Common myeloid progenitor, CD34-positive (primary cell): ENCODE measurements at regions of chr20 and their contacts with region 1.

Region 1: GRCh38 chr20:740141-740540 is 28.2 kb downstream of the SLC52A3 start:
- DNase-seq: no peak
- H3K4me3 ChIP-seq: no peak overlapping the region
- H3K27ac ChIP-seq: no peak overlapping the region
- H3K4me1 ChIP-seq: no peaks in the 10 kb centered on the region
- H3K27me3 ChIP-seq: peaks cover 0 to 1% (median 0%) of the 10 kb centered on the region in 5 experiments

Region 2: GRCh38 chr20:478949-479429 is 261.2 kb before region 1 on chr20:
- CTCF ChIA-PET with region 1: no interaction called
- POLR2A ChIA-PET with region 1: no interaction called
- DNase-seq: peak; percentile 72 to 89 (median 82)
- H3K4me3 ChIP-seq: no peak overlapping the region
- H3K27ac ChIP-seq: no peak overlapping the region
- H3K4me1 ChIP-seq: no peaks in the 10 kb centered on the region
- H3K27me3 ChIP-seq: no peaks in the 10 kb centered on the region

Region 3: DNA sequence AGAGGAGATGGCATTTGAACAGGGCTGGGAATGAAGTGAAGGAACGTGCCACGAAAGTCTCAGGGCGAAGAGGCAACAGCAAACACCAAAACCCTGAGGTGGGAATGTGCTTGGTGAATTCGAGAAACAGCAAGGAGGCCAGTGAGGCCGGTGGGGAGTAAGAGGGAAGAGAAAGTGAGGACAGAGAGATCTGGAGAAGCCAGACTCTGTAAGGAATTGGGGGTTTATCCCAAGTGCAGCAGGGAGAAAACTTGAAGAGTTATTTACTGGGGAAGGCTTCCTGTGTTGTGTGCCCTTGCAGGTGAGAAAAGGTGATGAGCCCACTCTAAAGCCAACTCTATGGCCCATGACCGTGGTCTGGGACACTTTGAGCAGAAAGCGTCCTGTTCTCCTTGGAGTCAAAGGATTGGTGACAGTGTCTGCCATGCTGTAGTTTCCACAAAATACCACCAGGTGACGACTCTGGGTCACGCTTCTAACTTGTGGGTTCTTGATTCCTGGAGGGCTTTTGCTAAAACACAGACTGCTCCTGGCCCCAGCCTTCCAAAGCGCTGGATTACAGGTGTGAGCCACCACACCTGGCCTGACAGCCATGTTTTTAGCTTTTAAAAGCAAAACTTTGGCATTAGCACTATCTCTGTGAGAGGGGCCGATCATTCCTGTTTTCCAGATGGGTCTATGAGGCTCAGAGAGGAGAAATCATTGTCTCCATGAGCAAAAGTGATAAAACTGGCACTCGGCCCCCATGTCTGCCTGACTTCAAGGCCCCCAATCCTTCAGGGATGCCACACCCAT is 178.5 kb before region 1 on chr20:
- CTCF ChIA-PET with region 1: interaction called, 13 read pairs
- POLR2A ChIA-PET with region 1: no interaction called
- DNase-seq: peak; percentile 71 to 86 (median 79)
- H3K4me3 ChIP-seq: no peak overlapping the region
- H3K27ac ChIP-seq: no peak overlapping the region
- H3K4me1 ChIP-seq: no peaks in the 10 kb centered on the region
- H3K27me3 ChIP-seq: peaks cover 0 to 2% (median 0%) of the 10 kb centered on the region in 5 experiments

Region 4: DNA sequence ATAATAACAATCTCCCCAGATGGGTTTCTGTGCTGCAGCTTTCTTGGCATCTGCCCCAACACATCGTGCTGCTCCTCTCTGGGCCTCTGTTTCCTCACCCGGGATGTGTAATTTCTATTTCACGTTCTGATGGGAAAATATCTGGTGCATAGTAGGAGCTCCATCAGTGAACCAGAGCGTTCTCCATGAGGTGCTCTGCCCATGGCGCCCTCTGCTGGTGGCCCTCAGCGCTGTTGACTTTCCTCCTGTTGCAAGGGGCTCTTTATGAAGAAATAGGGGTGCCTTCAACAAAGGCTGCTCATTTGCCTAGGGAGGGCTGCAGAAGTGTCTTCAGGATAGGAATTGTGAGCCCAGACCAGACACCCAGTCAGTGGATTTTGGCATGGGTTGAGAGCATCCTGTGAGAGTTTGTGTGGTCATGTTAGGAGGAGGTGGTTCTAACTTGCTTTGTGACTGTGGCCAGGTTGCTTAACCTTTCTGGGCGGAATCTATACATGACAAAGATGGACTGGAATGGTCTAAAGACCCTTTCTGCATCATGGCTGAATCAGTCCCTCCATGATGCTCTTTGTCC is 72.7 kb before region 1 on chr20:
- CTCF ChIA-PET with region 1: interaction called, 10 read pairs
- POLR2A ChIA-PET with region 1: no interaction called
- DNase-seq: peak; percentile 55 to 72 (median 64)
- H3K4me3 ChIP-seq: no peak overlapping the region
- H3K27ac ChIP-seq: no peak overlapping the region
- H3K4me1 ChIP-seq: peaks cover 0 to 32% (median 26%) of the 10 kb centered on the region in 4 experiments
- H3K27me3 ChIP-seq: peaks cover 0 to 49% (median 14%) of the 10 kb centered on the region in 5 experiments

Region 5: GRCh38 chr20:728248-728944 is 11.7 kb before region 1 on chr20:
- CTCF ChIA-PET with region 1: interaction called, 29 read pairs
- POLR2A ChIA-PET with region 1: no interaction called
- DNase-seq: peak; percentile 74 to 84 (median 84)
- H3K4me3 ChIP-seq: peak overlapping the region; percentile 6 to 70 (median 64)
- H3K27ac ChIP-seq: no peak overlapping the region
- H3K4me1 ChIP-seq: peaks cover 0 to 11% (median 9%) of the 10 kb centered on the region in 4 experiments
- H3K27me3 ChIP-seq: peaks cover 2 to 40% (median 10%) of the 10 kb centered on the region in 5 experiments

Region 6: GRCh38 chr20:750801-751200 is 10.7 kb after region 1 on chr20:
- CTCF ChIA-PET with region 1: interaction called, 29 read pairs
- POLR2A ChIA-PET with region 1: no interaction called
- DNase-seq: no peak
- H3K4me3 ChIP-seq: no peak overlapping the region
- H3K27ac ChIP-seq: no peak overlapping the region
- H3K4me1 ChIP-seq: peaks cover 0 to 33% (median 25%) of the 10 kb centered on the region in 4 experiments
- H3K27me3 ChIP-seq: no peaks in the 10 kb centered on the region

Region 7: DNA sequence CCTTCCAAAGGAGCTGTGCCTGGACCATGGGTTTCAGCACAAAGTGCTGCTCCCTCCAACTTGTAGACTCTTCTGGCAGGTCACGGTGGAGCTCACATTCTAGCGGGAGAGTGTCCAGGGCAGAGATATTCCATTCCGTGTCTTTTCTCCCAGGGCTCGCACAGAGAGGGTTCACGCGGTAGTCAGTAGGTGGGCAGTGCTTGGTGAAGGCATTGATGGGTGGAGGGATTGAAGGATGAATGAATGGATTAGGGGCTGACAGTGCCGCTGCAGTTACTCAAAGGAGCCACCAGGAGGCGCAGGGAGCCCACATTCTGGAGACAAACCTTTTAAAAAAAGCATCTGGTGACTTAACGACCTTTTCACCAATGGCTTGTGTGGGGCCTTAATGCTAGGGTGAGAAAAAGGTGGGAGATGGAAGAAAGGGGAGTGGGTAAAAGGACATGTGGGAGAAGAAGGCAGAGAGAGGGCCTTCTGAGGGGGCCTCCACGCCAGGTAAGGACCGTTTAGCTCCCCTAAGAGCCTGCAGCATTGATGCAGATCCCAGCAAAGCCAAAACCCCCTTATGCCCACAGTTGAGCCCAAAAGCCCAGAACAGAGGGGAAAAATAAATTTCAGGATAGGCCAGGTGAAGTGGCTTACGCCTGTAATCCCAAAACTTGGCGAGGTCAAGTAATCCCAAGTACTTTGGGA is 75.9 kb after region 1 on chr20:
- CTCF ChIA-PET with region 1: no interaction called
- POLR2A ChIA-PET with region 1: no interaction called
- DNase-seq: peak; percentile 64 to 79 (median 70)
- H3K4me3 ChIP-seq: no peak overlapping the region
- H3K27ac ChIP-seq: no peak overlapping the region
- H3K4me1 ChIP-seq: peaks cover 0 to 3% (median 0%) of the 10 kb centered on the region in 4 experiments
- H3K27me3 ChIP-seq: no peaks in the 10 kb centered on the region